ENCODE measurements at regions of chr5 and their contacts with region 1.

Region 1: GRCh38 chr5:66634601-66635000 is 38.4 kb downstream of the MAST4 start:
- DNase-seq: no peak
- ATAC-seq: no peak
- H3K4me3 ChIP-seq: no peak overlapping the region
- H3K27ac ChIP-seq: no peak overlapping the region
- H3K4me1 ChIP-seq: no peaks in the 10 kb centered on the region
- H3K27me3 ChIP-seq: no peaks in the 10 kb centered on the region
- CTCF ChIP-seq: no peak

Region 2: GRCh38 chr5:66255714-66256113 is 378.9 kb before region 1 on chr5:
- CTCF ChIA-PET with region 1: no interaction called
- POLR2A ChIA-PET with region 1: no interaction called
- in situ Hi-C with region 1: no loop called
- intact Hi-C with region 1: no loop called
- DNase-seq: no peak
- ATAC-seq: no peak
- H3K4me3 ChIP-seq: no peak overlapping the region
- H3K27ac ChIP-seq: no peak overlapping the region
- H3K4me1 ChIP-seq: no peaks in the 10 kb centered on the region
- H3K27me3 ChIP-seq: no peaks in the 10 kb centered on the region
- CTCF ChIP-seq: no peak

Region 3: GRCh38 chr5:66518716-66519171 is 115.9 kb before region 1 on chr5:
- CTCF ChIA-PET with region 1: no interaction called
- POLR2A ChIA-PET with region 1: no interaction called
- in situ Hi-C with region 1: no loop called
- intact Hi-C with region 1: no loop called
- DNase-seq: no peak
- ATAC-seq: no peak
- H3K4me3 ChIP-seq: no peak overlapping the region
- H3K27ac ChIP-seq: no peak overlapping the region
- H3K4me1 ChIP-seq: no peaks in the 10 kb centered on the region
- H3K27me3 ChIP-seq: no peaks in the 10 kb centered on the region
- CTCF ChIP-seq: no peak

Region 4: DNA sequence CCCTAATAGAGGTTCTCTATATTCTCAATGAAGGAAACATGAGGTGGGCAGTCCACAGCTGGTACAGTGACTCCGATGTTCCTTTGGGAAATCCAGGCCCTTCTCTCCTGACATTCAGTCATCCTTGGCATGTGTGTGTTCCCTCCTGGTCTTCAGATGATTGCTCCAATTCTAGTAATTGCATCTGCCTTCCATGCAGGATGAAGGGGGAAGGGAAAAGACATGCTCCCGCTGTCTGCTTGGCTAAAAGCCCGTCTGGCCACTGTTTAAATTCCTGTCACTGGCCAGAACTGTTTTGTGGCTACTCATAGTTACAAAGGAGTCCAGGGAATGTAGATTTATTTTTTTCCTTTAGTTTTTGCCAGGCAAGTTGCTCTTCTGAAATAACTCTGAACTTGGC is 26.5 kb after region 1 on chr5:
- CTCF ChIA-PET with region 1: no interaction called
- POLR2A ChIA-PET with region 1: interaction called, 11 read pairs
- in situ Hi-C with region 1: no loop called
- intact Hi-C with region 1: no loop called
- DNase-seq: no peak
- ATAC-seq: no peak
- H3K4me3 ChIP-seq: no peak overlapping the region
- H3K27ac ChIP-seq: no peak overlapping the region
- H3K4me1 ChIP-seq: no peaks in the 10 kb centered on the region
- H3K27me3 ChIP-seq: peaks cover 4% of the 10 kb centered on the region; the same call in 1 of the 2 replicates
- CTCF ChIP-seq: no peak

Measured in Panc1 (cell line).